Esophagus muscularis mucosa (tissue), 4 donors: ENCODE measurements at regions of chr2 and their contacts with region 1.

Region 1: DNA sequence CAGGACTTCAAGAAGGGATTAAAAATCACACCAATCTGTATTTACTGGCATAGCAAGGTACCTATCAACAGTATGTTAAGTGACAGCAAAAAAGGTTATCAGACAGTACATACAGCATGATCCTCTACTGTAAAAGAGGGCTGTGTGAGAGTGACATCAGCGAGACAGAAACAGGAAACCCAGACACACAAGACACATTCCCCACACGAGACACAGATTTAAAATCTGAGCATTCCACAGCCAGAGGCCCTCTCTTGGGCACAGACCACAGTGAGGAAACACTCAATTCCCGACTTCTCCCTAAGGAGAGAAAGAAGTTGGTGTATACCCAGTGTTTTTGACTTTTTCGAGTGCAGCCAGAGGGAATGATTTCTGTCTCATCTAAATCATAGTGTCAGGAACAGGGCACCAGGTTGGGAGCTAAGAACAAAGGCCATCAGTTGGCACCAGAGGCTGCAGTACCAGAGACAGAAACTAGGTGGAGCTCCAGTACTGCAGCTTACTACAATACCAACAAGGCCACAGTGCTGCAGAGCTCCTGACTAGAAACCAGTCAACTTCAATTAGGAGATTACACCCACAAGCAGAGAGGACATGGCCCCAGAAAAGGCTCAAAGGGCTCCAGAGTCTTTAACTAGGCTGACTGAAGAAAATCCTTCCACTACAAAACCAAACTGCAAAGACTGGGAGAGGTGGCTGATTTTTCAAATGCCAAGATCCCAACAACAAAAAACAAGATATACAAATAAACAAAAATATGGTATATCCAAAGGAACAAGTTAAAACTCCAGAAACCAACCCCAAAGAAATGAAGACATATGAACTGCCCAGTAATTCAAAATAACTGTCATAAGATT is 41.0 kb downstream of the UNC50 start:
- DNase-seq: peak; percentile 95
- H3K4me3 ChIP-seq: no peak overlapping the region
- H3K27ac ChIP-seq: no peak overlapping the region
- H3K4me1 ChIP-seq: no peaks in the 10 kb centered on the region
- H3K27me3 ChIP-seq: no peaks in the 10 kb centered on the region
- CTCF ChIP-seq: peak; percentile 98 to 100 (median 98)
- EP300 ChIP-seq: no peak
- POLR2A ChIP-seq: no peak

Region 2: DNA sequence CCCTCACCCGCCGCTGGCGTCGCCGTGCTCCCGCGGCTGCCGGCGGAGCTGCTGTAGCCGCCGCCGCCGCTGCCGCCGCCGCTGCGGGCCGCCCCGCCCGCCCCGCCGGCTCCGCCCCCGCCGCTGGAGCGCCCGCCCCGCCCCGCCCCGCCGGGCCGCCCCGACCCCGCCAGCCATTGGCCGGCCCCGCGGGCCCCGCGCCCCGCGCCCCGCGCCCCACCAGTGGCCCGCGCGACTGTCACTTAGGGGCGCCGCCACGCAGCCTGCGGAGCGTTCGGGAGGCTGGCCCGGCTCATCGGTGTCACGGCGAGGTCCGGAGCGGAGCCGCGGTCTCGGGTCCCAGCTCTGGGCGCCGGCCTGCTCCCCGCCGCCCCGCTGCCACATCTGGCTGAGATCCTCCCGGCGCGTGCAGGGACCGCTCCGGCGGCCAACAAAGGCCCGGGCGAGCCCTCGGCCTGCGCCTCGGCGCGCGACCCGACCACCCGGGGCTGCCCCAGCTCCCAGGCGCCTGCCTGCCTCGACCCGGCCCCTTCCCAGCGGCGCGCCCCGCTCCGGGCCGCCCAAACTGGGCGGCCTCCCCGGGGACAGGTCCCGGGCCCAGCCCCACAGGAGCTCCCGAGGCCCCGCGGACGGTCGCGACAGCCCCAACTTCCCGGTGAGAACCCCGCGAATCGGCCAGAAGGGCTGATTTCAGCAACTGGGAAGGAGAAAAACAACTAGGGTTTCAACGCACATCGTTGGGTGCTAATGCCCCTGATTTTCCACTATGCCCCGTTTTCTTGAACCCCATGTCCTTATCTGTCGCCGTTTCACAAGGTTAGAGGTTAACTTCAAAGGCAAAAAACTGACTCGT is 81.9 kb after region 1 on chr2 and contains the start of gene MGAT4A:
- intact Hi-C with region 1: loop called (anchors 2 kb)
- DNase-seq: no peak
- H3K4me3 ChIP-seq: peak within 1 kb of the TSS; percentile 69 to 97 (median 95)
- H3K27ac ChIP-seq: peak within 1 kb of the TSS; percentile 83 to 95 (median 94)
- H3K4me1 ChIP-seq: peaks cover 29 to 49% (median 45%) of the 10 kb centered on the region in 4 donors
- H3K27me3 ChIP-seq: no peaks in the 10 kb centered on the region
- CTCF ChIP-seq: no peak
- EP300 ChIP-seq: no peak
- POLR2A ChIP-seq: peak; percentile 53
- total RNA-seq, gene MGAT4A: 9.9 to 21.4 (median 15.2) TPM

Region 3: DNA sequence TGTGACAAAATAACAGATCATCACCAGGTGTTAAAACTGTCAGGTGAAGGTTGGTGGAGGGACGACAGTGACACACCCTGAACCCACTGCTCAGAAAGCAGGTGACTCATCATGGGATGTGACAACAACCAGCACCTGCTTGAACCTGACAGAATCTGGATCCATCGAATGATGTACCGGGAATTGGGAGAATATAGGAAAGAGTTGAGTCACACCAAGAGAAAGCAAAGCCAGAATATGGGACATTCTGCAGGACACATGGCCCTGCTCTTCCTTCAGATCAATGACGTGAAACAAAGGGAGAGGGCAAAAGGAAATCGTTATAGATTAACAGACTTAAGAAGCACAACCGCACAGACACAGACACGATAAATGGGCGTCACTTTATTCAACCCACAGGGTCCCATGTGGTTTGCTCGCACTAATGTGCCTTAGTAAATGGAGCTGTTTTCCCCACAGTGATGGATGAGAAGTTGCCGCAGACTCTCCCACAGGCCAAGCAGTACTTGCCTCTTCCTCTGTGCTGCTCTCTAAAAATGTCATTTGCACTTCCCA is 186.5 kb after region 1 on chr2:
- intact Hi-C with region 1: loop called (anchors 2 kb)
- DNase-seq: no peak
- H3K4me3 ChIP-seq: no peak overlapping the region
- H3K27ac ChIP-seq: no peak overlapping the region
- H3K4me1 ChIP-seq: peaks cover 4 to 16% (median 9%) of the 10 kb centered on the region in 4 donors
- H3K27me3 ChIP-seq: no peaks in the 10 kb centered on the region
- CTCF ChIP-seq: no peak
- EP300 ChIP-seq: no peak
- POLR2A ChIP-seq: no peak

Region 4: DNA sequence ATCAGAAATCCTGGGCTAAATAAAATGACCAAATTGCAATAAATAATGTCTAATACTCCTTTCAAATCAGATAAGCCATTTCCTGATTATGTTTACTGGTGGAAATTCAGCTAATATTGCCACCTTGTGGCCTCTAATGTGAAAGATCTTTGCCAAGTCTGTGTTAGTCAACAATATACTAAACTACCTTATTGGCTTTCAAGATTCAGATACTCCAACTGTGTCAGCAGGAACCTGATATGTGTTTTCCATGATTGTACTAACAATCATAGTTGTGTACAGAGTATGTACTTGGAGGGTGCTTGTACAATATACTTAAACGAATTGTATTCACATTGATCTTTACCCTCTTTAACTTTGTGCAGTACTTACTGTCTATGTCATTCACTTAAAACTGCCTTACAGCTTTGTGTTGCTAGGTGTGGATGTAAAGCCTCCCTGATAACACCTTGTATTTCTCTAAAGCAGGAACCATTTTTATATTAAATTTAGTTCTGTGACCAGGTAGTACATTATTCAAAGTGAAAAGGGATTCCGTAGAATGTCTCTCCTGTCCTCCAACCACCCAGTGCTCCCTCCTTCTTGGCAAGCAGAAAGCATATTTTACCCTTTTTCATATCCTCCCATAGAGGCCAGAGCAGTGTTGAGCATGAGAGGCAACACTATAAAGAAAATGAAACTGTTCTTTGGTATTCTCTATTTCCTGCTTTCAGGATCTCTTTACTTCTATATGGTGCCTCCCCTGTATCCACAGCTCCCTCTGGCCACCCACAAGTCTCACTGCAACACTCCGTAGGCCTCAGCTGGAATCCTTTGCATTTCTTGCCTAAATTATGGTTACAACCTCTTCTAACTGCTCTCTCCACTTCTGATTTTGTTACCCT is 417.0 kb after region 1 on chr2:
- intact Hi-C with region 1: loop called (anchors 10 kb)
- DNase-seq: no peak
- H3K4me3 ChIP-seq: no peak overlapping the region
- H3K27ac ChIP-seq: no peak overlapping the region
- H3K4me1 ChIP-seq: peaks cover 0 to 6% (median 0%) of the 10 kb centered on the region in 4 donors
- H3K27me3 ChIP-seq: no peaks in the 10 kb centered on the region
- CTCF ChIP-seq: peak in 2 of 3 experiments; percentile 16 to 17
- EP300 ChIP-seq: no peak
- POLR2A ChIP-seq: no peak

Region 5: DNA sequence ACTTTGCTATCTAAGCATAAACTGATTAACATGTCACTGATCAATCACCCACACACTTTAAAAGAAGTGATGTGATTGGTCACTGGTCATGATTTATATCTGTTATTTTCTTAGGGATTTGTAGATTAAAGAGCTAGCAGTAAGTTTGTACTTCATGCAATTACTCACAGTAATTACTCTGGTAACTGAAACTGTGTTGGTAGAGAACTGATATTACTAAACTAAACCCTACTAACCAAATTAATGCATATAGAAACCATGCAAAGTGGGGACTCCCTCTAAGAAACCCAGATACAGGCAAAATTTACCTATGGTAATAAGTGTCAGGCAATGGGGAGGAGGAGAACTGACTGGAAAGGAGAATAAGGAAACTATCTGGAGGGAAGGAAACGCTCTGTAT is 447.4 kb after region 1 on chr2:
- intact Hi-C with region 1: no loop called
- DNase-seq: no peak
- H3K4me3 ChIP-seq: no peak overlapping the region
- H3K27ac ChIP-seq: no peak overlapping the region
- H3K4me1 ChIP-seq: no peaks in the 10 kb centered on the region
- H3K27me3 ChIP-seq: no peaks in the 10 kb centered on the region
- CTCF ChIP-seq: no peak
- EP300 ChIP-seq: no peak
- POLR2A ChIP-seq: no peak